GM12878 (cell line): ENCODE measurements at regions of chr4 and their contacts with region 1.

Region 1: DNA sequence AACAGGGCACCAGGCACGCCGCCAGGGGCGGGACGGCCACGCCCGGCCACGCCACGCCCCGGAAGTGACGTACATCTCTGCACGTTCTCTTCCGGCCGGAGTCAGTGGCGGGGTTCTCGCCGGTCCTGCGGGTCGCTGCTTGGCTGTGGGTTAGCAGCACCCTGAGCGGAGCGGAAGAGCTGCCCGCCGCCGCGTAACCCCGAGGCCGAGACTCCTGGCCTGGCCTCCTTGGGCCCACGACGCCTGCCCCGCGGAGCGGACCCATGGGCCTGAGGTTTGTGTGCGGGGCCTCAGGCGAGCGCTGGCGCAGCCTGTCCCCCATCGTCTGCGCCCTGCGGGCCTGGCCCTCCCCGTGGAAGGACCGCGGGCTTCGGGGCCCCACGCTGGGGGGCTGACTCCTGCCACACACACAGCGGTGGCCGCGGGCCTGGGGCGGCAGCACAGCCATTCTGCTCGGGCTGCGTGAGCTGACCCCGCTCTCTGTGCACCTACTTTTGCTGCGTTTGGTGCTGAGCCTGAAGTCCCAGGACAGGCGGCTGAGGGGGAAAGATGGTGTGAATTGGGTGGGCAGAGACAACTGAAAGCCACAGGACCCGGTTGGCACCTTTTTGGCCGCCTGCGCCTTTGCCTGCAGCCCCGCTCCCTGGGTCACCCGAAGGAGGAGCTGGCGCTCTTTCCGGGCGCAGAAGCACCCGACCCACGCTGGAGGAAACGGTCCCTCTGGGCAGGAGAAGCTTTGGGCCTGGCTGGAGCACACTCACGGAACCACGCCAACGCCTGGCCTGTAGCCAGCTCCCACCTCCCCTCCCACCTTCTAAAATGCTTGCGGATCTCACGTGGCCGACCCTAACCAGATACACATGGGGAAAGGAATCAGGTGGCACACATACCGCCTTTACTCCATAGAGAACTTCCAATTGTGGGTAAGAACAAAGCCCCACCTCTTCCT is 28.1 kb downstream of the NOP14 start:
- DNase-seq: peak; percentile 80
- ATAC-seq: peak; percentile 48
- H3K4me3 ChIP-seq: peak overlapping the region; percentile 97
- H3K27ac ChIP-seq: peak overlapping the region; percentile 74
- H3K4me1 ChIP-seq: peaks cover 42% of the 10 kb centered on the region
- H3K27me3 ChIP-seq: no peaks in the 10 kb centered on the region
- CTCF ChIP-seq: 0 out of 6 replicates have a peak, but pooled peaks of 1 of the 3 experiments have one; percentile 12
- EP300 ChIP-seq: no peak
- POLR2A ChIP-seq: no peak
- RAD21 ChIP-seq: no peak

Region 2: DNA sequence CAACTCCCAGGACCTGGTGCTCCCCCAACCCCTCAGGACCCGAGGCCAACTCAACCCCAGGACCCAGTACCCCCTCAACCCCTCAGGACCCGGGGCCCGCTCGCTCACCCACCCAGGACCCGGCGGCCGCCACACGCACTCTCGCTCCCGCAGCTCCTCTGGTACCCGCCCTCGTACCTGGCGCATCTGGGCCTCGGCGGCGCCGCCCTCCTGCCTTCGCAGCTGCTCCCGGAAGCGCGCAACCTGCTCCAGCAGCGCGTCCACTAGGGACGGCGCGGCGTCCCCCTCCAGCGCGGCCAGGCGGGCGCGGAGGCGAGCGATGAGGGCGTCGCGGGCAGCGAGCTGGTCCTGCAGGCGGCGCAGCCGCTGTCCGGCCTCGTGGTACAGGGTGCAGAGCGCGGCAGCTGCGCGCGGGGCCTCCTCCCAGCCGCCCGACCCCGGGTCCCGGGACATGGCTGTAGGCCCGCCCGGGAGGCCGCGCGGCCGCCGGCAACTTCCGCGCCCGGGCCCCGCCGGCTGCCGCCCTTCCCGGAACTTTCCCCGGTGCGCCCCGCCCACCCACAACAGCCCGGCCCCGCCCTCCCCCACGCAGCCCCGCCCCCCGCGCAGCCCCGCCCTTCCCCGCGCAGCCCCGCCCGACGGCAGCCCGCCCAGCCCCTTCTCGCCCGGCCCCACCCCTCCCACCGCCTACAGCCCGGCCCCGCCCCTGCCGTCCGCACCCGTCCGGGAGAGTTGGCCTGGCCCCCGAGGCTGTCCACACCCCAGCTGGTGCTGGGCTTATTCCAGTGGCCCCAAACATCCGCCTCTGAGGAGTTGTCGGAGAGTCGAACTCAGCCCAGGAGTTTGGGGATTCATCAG is 179.0 kb before region 1 on chr4 and contains the start of gene TNIP2:
- CTCF ChIA-PET with region 1: no interaction called
- POLR2A ChIA-PET with region 1: interaction called, 3 read pairs
- RAD21 ChIA-PET with region 1: no interaction called
- SMC1A ChIA-PET with region 1: no interaction called
- in situ Hi-C with region 1: loop called (anchors 25 kb)
- intact Hi-C with region 1: loop called (anchors 5 kb)
- DNase-seq: no peak
- ATAC-seq: peak; percentile 84
- H3K4me3 ChIP-seq: peak within 1 kb of the TSS; percentile 85
- H3K27ac ChIP-seq: peak within 1 kb of the TSS; percentile 72
- H3K4me1 ChIP-seq: peaks cover 5% of the 10 kb centered on the region
- H3K27me3 ChIP-seq: no peaks in the 10 kb centered on the region
- CTCF ChIP-seq: 0 out of 6 replicates have a peak, but pooled peaks of 2 of the 3 experiments have one; percentile 7 to 8
- EP300 ChIP-seq: no peak
- POLR2A ChIP-seq: peak; percentile 86
- RAD21 ChIP-seq: no peak
- polyA plus RNA-seq, gene TNIP2: 1.4 to 3.4 TPM

Region 3: GRCh38 chr4:2852481-2852921 is 82.6 kb before region 1 on chr4:
- CTCF ChIA-PET with region 1: interaction called, 5 read pairs
- POLR2A ChIA-PET with region 1: interaction called, 9 read pairs
- RAD21 ChIA-PET with region 1: interaction called, 7 read pairs
- SMC1A ChIA-PET with region 1: interaction called, 4 read pairs
- in situ Hi-C with region 1: no loop called
- intact Hi-C with region 1: loop called (anchors 5 kb)
- DNase-seq: peak; percentile 59
- ATAC-seq: peak; percentile 67
- H3K4me3 ChIP-seq: peak overlapping the region; percentile 65
- H3K27ac ChIP-seq: peak overlapping the region; percentile 60
- H3K4me1 ChIP-seq: peaks cover 50% of the 10 kb centered on the region
- H3K27me3 ChIP-seq: no peaks in the 10 kb centered on the region
- CTCF ChIP-seq: no peak
- EP300 ChIP-seq: no peak
- POLR2A ChIP-seq: no peak
- RAD21 ChIP-seq: no peak

Region 4: GRCh38 chr4:2954358-2955185 is 19.5 kb after region 1 on chr4:
- CTCF ChIA-PET with region 1: interaction called, 62 read pairs
- POLR2A ChIA-PET with region 1: interaction called, 20 read pairs
- RAD21 ChIA-PET with region 1: interaction called, 52 read pairs
- SMC1A ChIA-PET with region 1: interaction called, 65 read pairs
- in situ Hi-C with region 1: no loop called
- intact Hi-C with region 1: loop called (anchors 1 kb)
- DNase-seq: peak; percentile 75
- ATAC-seq: peak; percentile 89
- H3K4me3 ChIP-seq: no peak overlapping the region
- H3K27ac ChIP-seq: peak overlapping the region; percentile 78
- H3K4me1 ChIP-seq: peaks cover 41% of the 10 kb centered on the region
- H3K27me3 ChIP-seq: no peaks in the 10 kb centered on the region
- CTCF ChIP-seq: peak in 2 of 3 experiments; percentile 48 to 49; a peak in 5 of 6 replicates
- EP300 ChIP-seq: peak in 1 of 2 experiments; percentile 40; a peak in 2 of 4 replicates
- POLR2A ChIP-seq: no peak
- RAD21 ChIP-seq: 0 out of 2 replicates have a peak, but pooled peaks have one; percentile 8